IMR-90 (cell line): ENCODE measurements at regions of chr17 and their contacts with region 1.

Region 1: GRCh38 chr17:10875979-10876555 is 38.2 kb upstream of the PIRT start:
- DNase-seq: peak; percentile 17
- ATAC-seq: peak; percentile 59
- H3K4me3 ChIP-seq: no peak overlapping the region
- H3K27ac ChIP-seq: no peak overlapping the region
- H3K4me1 ChIP-seq: no peaks in the 10 kb centered on the region
- H3K27me3 ChIP-seq: no peaks in the 10 kb centered on the region
- CTCF ChIP-seq: peak; percentile 48
- POLR2A ChIP-seq: no peak
- RAD21 ChIP-seq: peak; percentile 53

Region 2: DNA sequence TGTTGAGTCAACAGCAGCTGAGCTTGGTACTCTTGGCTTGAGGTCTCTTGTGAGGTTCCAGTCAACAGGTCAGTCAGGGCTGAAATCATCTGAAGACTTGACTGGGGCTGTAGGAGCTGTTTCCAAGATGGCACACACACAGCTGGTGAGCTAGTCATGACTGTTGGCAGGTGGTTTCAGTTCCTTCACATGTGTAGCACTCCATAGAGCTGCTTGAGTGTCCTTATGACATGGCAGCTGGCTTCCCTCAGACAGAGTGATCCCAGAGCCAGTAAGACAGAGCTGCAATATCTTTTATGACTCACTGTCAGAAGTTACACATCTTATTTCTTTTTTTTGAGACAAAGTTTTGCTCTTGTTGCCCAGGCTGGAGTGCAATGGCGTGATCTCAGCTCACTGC is 658.2 kb before region 1 on chr17:
- CTCF ChIA-PET with region 1: no interaction called
- POLR2A ChIA-PET with region 1: no interaction called
- dilution Hi-C with region 1: no loop called
- in situ Hi-C with region 1: no loop called
- intact Hi-C with region 1: no loop called
- DNase-seq: peak; percentile 21
- ATAC-seq: no peak
- H3K4me3 ChIP-seq: no peak overlapping the region
- H3K27ac ChIP-seq: no peak overlapping the region
- H3K4me1 ChIP-seq: peaks cover 1% of the 10 kb centered on the region; the same call in 1 of the 2 replicates
- H3K27me3 ChIP-seq: no peaks in the 10 kb centered on the region
- CTCF ChIP-seq: no peak
- POLR2A ChIP-seq: no peak
- RAD21 ChIP-seq: no peak

Region 3: DNA sequence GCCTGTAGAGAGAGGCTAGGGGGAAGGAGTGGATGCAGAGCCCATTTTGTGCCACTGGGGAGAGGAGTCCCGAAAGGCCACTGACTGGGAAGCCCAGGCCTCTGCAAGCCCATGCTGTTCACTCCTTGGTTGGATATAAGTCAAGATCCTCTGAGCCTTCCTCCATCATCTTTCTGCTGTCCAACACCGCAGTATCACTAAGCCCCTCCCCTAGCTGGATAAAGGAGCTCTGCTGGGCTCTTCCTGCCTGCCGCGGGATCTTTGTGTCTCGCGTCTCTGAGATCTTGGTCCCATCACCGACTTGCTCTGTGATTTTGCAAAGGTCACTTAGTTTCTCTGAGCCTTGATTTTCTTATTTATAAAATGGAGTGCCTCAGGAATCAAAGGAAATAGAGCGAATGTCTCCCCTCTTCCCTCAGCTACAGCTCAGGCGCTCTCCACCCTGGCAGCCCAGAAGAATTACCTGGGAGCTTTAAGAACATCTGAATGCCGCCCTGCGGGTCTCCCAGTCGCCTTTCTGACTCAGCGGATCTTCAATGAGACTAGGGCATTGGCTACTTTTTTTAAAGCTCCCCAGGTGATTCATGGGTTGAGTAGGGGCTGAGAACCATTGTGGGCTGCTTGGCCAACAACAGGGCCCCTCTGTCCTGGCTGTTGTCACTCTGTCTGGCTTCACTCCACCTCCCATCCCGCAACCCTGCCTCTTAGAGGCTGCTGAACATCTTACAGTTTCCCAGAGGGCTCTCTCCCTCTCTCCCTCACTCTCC is 121.0 kb before region 1 on chr17:
- CTCF ChIA-PET with region 1: no interaction called
- POLR2A ChIA-PET with region 1: no interaction called
- dilution Hi-C with region 1: no loop called
- in situ Hi-C with region 1: no loop called
- intact Hi-C with region 1: no loop called
- DNase-seq: no peak
- ATAC-seq: no peak; the same call in none of the 2 replicates
- H3K4me3 ChIP-seq: no peak overlapping the region
- H3K27ac ChIP-seq: no peak overlapping the region
- H3K4me1 ChIP-seq: no peaks in the 10 kb centered on the region
- H3K27me3 ChIP-seq: peaks cover 4% of the 10 kb centered on the region; the same call in 1 of the 2 replicates
- CTCF ChIP-seq: no peak
- POLR2A ChIP-seq: no peak
- RAD21 ChIP-seq: no peak

Region 4: GRCh38 chr17:11986942-11987329 is 1110.9 kb after region 1 on chr17:
- CTCF ChIA-PET with region 1: interaction called, 3 read pairs
- POLR2A ChIA-PET with region 1: no interaction called
- dilution Hi-C with region 1: no loop called
- in situ Hi-C with region 1: loop called (anchors 10 kb)
- intact Hi-C with region 1: loop called (anchors 1 kb)
- DNase-seq: peak; percentile 60
- ATAC-seq: peak; percentile 92
- H3K4me3 ChIP-seq: no peak overlapping the region
- H3K27ac ChIP-seq: no peak overlapping the region
- H3K4me1 ChIP-seq: no peaks in the 10 kb centered on the region
- H3K27me3 ChIP-seq: no peaks in the 10 kb centered on the region
- CTCF ChIP-seq: peak; percentile 58
- POLR2A ChIP-seq: no peak
- RAD21 ChIP-seq: peak; percentile 62